ENCODE measurements at regions of chr5 and their contacts with region 1.

Region 1: DNA sequence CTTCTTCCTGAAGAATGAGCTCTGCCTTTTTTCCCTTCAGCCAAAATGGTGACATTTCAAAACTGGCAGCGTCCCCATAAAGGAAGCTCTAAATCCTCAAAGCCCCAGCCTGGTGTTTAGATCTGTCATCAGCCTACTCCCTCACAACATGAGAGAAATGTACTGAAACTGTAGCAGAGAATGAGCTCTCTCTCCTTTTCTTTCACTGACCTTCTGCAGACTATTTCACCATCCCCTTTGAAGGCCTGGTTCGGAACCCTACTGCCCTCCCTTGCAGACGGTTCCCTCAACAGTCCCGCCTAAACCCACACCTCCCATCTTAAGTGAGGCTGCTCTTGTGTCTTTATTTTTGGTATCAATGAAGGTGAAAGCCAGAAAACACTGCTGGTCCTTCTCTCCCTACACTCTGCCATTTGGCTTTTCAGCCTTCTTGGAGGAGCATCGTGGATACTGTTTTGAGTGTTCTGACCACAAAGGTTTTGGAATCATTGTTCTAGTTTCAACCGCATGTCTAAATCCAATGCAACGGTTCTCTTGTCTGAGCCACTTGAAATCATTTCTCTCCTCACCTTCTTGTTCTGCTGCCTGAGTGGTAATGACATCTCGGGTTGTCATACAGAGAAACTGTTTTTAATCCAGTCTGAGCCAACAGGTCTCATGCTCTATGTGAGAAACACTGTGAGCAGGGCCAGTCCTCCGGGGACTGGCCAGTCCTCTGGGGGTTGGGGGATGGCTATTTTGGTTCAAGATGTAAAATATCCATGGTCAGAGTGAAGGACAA is 39.0 kb downstream of the ITK start:
- DNase-seq: no peak
- H3K4me3 ChIP-seq: no peak overlapping the region
- H3K27ac ChIP-seq: no peak overlapping the region
- H3K4me1 ChIP-seq: no peaks in the 10 kb centered on the region
- H3K27me3 ChIP-seq: no peaks in the 10 kb centered on the region
- CTCF ChIP-seq: no peak

Region 2: DNA sequence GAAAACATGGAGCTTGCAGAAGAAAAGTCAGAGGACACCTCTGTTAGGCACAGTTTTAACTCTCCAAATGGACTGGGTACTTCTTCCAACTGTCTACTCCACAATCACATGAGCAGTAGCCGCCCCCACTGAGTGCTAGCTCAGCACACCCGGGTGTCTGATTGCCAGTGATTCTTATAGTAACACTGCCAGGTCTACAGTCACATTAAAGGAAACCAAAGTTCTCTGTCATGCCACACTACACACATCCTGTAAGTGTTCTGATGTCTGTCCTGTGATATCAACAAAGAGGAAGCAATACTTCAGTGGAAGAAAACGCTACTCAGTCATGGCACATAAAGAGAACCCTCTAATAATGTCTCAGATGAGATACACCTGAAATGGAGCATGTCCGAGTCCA is 110.7 kb before region 1 on chr5 and contains the start of gene HAVCR2:
- CTCF ChIA-PET with region 1: no interaction called
- dilution Hi-C with region 1: loop called (anchors 25 kb)
- in situ Hi-C with region 1: no loop called
- intact Hi-C with region 1: no loop called
- DNase-seq: no peak
- H3K4me3 ChIP-seq: no peak within 1 kb of the TSS
- H3K27ac ChIP-seq: no peak within 1 kb of the TSS
- H3K4me1 ChIP-seq: no peaks in the 10 kb centered on the region
- H3K27me3 ChIP-seq: no peaks in the 10 kb centered on the region
- CTCF ChIP-seq: no peak
- total RNA-seq, gene HAVCR2: 0.17 TPM in 1 of 2 donors, not detected in the other

Region 3: DNA sequence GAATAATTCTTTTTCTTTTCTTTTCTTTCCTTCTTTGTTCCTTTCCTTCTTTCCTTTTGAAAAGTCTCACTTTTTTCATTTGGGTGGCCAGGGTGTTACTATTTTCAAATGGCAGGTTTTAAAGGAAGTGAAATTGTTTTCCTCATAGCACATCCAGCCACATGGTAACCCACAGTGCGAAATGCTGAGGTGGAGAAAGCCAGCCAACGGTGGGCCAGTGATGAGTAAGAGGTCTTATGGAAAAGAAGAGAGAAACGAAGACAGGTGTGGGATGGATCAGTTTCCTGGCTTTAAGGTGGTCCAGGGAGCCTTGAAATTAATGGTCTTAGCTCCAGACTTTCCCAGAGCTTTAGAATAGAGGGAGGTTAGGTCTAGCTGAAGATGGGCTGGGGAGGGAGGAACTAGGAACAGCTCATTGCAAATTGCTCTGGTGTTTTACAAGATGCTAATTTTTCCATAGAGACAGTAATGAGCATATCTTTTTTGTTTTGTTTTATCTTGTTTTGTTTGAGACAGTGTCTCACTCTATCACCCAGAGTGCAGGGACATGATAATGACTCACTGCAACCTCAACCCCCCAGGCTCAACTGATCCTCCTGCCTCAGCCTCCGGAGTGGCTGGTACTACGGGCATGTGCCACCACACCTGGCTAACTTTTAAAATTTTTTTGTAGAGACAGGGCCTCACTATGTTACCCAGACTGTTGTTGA is 21.2 kb before region 1 on chr5:
- CTCF ChIA-PET with region 1: no interaction called
- dilution Hi-C with region 1: no loop called
- in situ Hi-C with region 1: no loop called
- intact Hi-C with region 1: no loop called
- DNase-seq: no peak
- H3K4me3 ChIP-seq: no peak overlapping the region
- H3K27ac ChIP-seq: no peak overlapping the region
- H3K4me1 ChIP-seq: no peaks in the 10 kb centered on the region
- H3K27me3 ChIP-seq: peaks cover 3% of the 10 kb centered on the region
- CTCF ChIP-seq: no peak

Region 4: GRCh38 chr5:157279605-157280239 is 60.0 kb after region 1 on chr5:
- CTCF ChIA-PET with region 1: no interaction called
- dilution Hi-C with region 1: loop called (anchors 5 kb)
- in situ Hi-C with region 1: no loop called
- intact Hi-C with region 1: no loop called
- DNase-seq: no peak
- H3K4me3 ChIP-seq: no peak overlapping the region
- H3K27ac ChIP-seq: no peak overlapping the region
- H3K4me1 ChIP-seq: no peaks in the 10 kb centered on the region
- H3K27me3 ChIP-seq: no peaks in the 10 kb centered on the region
- CTCF ChIP-seq: no peak

Region 5: GRCh38 chr5:157294407-157295091 is 74.9 kb after region 1 on chr5:
- CTCF ChIA-PET with region 1: no interaction called
- dilution Hi-C with region 1: no loop called
- in situ Hi-C with region 1: no loop called
- intact Hi-C with region 1: no loop called
- DNase-seq: no peak
- H3K4me3 ChIP-seq: no peak overlapping the region
- H3K27ac ChIP-seq: no peak overlapping the region
- H3K4me1 ChIP-seq: peaks cover 13% of the 10 kb centered on the region
- H3K27me3 ChIP-seq: no peaks in the 10 kb centered on the region
- CTCF ChIP-seq: no peak

Region 6: GRCh38 chr5:157400741-157401495 is 181.2 kb after region 1 on chr5:
- CTCF ChIA-PET with region 1: no interaction called
- dilution Hi-C with region 1: no loop called
- in situ Hi-C with region 1: no loop called
- intact Hi-C with region 1: no loop called
- DNase-seq: no peak
- H3K4me3 ChIP-seq: no peak overlapping the region
- H3K27ac ChIP-seq: no peak overlapping the region
- H3K4me1 ChIP-seq: no peaks in the 10 kb centered on the region
- H3K27me3 ChIP-seq: no peaks in the 10 kb centered on the region
- CTCF ChIP-seq: no peak

Measured in mammary epithelial cell (primary cell).